B cell (primary cell): ENCODE measurements at regions of chr17 and their contacts with region 1.

Region 1: DNA sequence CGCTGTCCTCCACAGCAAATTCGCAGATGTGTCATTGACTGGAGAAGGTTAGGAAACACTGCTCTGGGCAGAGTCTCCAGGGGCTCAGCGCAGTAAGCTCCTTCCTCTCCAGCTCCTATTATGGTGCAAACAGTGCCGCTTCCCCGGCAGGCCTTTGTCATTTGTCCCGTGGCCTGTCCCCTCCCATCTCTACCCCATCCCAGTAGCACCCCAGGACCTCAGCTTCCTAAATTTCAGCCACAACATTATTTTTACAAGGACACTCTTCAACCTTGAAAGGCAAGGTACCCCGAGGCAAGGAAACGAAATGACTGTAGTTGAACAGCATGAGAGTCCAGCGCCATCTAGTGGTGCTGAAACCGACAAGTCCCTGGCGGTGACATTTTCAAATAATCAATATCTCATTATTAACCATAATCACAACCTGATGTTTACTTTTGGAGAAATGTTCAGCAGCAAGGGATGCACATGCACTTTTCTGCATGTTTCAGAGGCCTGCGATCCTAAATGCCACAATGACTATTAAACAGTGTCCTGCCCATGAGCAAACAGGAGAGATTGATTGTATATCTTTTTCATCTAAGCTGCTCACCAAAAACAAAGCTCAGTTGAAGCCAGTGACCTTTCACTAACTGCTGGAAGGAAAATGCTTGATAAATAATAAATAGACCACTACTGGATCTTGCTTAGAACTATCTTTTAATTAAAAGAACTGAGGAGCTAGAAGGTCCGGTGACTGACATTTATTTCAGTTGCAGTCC is 16.5 kb downstream of the MRPS23 start:
- DNase-seq: peak; percentile 81
- ATAC-seq: peak; percentile 62
- H3K4me3 ChIP-seq: peak overlapping the region; percentile 36 to 83 (median 58)
- H3K4me3 Mint-ChIP-seq: no peak overlapping the region
- H3K27ac ChIP-seq: no peak overlapping the region
- H3K27ac Mint-ChIP-seq: no peak overlapping the region
- H3K4me1 ChIP-seq: peaks cover 8 to 12% of the 10 kb centered on the region in 2 donors
- H3K4me1 Mint-ChIP-seq: peaks cover 2% of the 10 kb centered on the region
- H3K27me3 ChIP-seq: no peaks in the 10 kb centered on the region
- H3K27me3 Mint-ChIP-seq: no peaks in the 10 kb centered on the region
- CTCF ChIP-seq: peak; percentile 96

Region 2: DNA sequence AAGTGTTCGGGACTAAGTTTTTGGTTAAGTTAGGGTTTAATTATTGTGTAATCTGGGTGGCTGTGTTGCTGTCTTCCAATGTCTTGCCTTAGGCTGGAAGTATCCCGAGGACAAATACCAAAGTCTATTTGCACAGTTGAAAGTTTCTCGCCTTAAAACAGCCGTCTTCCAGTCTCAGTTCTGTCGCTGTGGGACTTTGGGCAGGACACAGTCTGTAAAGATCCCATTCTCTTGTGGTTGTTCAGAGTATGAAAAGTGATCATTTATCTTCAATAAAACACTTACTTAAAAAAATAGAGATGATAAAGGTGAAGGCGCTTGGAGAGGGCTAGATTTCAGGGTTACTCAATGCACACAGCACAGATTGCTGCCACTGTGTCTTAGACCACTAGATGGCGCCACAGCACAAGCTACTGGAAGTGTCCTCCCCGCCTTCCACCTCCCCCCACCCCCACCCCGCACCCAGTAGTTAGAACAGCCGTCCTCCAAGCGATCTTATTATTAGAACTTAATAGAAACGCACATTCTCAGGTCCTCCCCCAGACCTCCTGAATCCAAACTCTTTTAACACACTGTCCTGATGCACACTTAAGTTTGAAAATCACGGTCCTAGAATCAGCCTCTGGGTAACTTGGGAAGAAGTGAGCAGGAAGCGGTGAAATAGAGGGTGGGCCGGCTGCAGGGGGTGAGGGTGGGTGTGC is 702.4 kb before region 1 on chr17:
- CTCF ChIA-PET with region 1: interaction called, 47 read pairs
- POLR2A ChIA-PET with region 1: no interaction called
- intact Hi-C with region 1: loop called (anchors 1 kb)
- DNase-seq: peak; percentile 85
- ATAC-seq: peak; percentile 98
- H3K4me3 ChIP-seq: no peak overlapping the region
- H3K4me3 Mint-ChIP-seq: no peak overlapping the region
- H3K27ac ChIP-seq: no peak overlapping the region
- H3K27ac Mint-ChIP-seq: no peak overlapping the region
- H3K4me1 ChIP-seq: peaks cover 8 to 14% of the 10 kb centered on the region in 2 donors
- H3K4me1 Mint-ChIP-seq: peaks cover 15% of the 10 kb centered on the region
- H3K27me3 ChIP-seq: no peaks in the 10 kb centered on the region
- H3K27me3 Mint-ChIP-seq: peaks cover 22% of the 10 kb centered on the region
- CTCF ChIP-seq: peak; percentile 87

Region 3: GRCh38 chr17:57747221-57748017 is 85.9 kb before region 1 on chr17:
- CTCF ChIA-PET with region 1: interaction called, 15 read pairs
- POLR2A ChIA-PET with region 1: no interaction called
- intact Hi-C with region 1: no loop called
- DNase-seq: peak; percentile 75
- ATAC-seq: peak; percentile 73
- H3K4me3 ChIP-seq: no peak overlapping the region
- H3K4me3 Mint-ChIP-seq: no peak overlapping the region
- H3K27ac ChIP-seq: no peak overlapping the region
- H3K27ac Mint-ChIP-seq: no peak overlapping the region
- H3K4me1 ChIP-seq: peaks cover 12 to 14% of the 10 kb centered on the region in 2 donors
- H3K4me1 Mint-ChIP-seq: peaks cover 17% of the 10 kb centered on the region
- H3K27me3 ChIP-seq: peaks cover 0 to 4% (median 0%) of the 10 kb centered on the region in 4 experiments
- H3K27me3 Mint-ChIP-seq: peaks cover 14% of the 10 kb centered on the region
- CTCF ChIP-seq: peak; percentile 82

Region 4: DNA sequence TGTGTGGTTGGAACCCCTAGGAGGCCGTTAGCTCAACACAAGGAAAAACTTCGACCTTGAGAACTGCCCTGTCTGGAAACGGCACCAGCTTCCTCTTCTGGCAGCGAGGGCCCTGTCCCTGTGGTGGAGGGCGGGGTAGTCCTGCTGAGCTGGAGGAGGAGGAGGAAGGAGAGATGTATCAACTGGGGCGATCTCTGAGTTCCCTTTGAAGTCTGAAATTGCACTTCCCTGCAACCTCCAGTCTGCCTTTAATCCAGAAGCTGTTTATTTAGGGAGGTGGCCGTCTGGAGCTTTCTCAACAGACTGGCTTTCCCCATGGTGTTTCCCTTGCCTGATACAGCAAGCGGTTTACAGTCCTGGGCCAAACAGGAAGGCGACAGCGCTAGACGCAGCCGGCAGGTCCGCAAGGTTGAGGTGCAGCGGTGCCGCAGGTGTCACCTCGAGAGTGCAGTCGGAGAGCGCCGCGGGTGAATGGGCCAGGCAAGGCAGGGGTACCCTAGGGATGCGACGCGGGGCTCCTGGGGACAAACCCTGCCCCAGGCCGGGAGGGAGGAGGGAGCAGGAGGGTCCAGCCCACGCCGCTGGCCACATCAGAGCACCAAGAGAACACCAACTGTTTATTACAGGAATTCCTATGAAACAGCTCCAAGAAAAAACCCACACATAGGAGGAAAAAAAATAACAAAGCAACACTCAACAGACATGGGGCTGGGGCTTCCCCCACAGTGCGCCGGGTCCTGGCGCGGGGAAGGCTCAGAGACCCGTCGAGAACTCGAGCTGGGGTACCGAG is 27.8 kb after region 1 on chr17:
- CTCF ChIA-PET with region 1: interaction called, 15 read pairs
- POLR2A ChIA-PET with region 1: no interaction called
- intact Hi-C with region 1: no loop called
- DNase-seq: peak; percentile 62
- ATAC-seq: peak; percentile 60
- H3K4me3 ChIP-seq: peak overlapping the region; percentile 3 to 59 (median 39)
- H3K4me3 Mint-ChIP-seq: peak overlapping the region; percentile 90
- H3K27ac ChIP-seq: no peak overlapping the region
- H3K27ac Mint-ChIP-seq: peak overlapping the region; percentile 11
- H3K4me1 ChIP-seq: peaks cover 17 to 20% of the 10 kb centered on the region in 2 donors
- H3K4me1 Mint-ChIP-seq: peaks cover 16% of the 10 kb centered on the region
- H3K27me3 ChIP-seq: peaks cover 0 to 51% (median 19%) of the 10 kb centered on the region in 4 experiments
- H3K27me3 Mint-ChIP-seq: peaks cover 23% of the 10 kb centered on the region
- CTCF ChIP-seq: no peak

Region 5: GRCh38 chr17:58317421-58318064 is 484.2 kb after region 1 on chr17:
- CTCF ChIA-PET with region 1: no interaction called
- POLR2A ChIA-PET with region 1: no interaction called
- intact Hi-C with region 1: no loop called
- DNase-seq: peak; percentile 87
- ATAC-seq: peak; percentile 97
- H3K4me3 ChIP-seq: no peak overlapping the region
- H3K4me3 Mint-ChIP-seq: peak overlapping the region; percentile 33
- H3K27ac ChIP-seq: peak overlapping the region; percentile 53 to 76
- H3K27ac Mint-ChIP-seq: peak overlapping the region; percentile 96
- H3K4me1 ChIP-seq: peaks cover 11 to 12% of the 10 kb centered on the region in 2 donors
- H3K4me1 Mint-ChIP-seq: peaks cover 14% of the 10 kb centered on the region
- H3K27me3 ChIP-seq: no peaks in the 10 kb centered on the region
- H3K27me3 Mint-ChIP-seq: no peaks in the 10 kb centered on the region
- CTCF ChIP-seq: peak; percentile 84